ENCODE measurements at regions of chr10 and their contacts with region 1.

Region 1: DNA sequence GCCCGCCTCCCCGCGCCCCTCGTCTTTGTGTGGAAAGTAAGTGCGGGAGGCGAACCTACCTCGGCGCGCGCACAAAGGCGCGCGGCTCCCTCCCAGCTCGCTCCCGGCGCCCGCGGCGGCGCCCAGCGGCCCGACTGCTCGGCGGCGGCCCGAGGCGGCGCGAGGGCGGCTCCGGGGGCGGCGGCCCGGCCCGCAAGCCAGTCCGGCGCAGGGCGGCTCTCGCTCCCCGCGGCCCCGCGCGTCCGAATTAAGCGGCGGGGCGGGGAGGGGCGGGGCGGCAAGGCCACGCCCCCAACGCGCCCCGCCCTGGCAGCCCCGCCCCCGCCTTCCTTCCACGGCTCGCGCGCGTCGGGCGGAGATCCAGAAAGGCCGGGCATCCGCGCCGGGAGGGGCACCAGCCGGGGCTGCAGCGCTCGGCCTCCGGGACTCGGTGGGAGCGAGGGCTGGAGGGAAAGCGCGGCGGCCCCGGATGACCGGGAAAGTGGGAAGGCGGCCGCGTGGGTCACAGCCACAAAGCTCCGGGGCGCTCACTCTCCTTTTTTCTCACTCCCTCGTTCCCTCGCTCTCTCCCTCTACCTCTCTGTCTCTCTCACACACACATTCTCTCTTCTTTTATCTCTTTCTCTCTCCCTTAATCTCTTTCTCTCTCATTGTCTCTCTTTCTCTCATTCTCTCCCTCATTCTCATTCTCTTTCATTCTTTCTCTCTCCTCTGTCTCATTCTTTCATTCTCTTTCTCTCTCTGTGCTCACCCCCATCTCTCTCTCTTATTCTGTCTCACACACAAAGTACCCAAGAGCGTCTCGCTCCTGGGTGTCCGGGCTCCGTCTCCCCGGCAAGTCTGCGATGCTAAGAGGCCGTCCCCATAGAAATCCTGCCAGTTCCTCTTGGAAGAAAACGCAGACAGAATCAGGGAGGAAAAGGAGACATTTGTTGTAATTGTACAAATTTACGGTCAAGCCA is 170.2 kb downstream of the FAM107B start:
- DNase-seq: peak; percentile 79 to 90
- ATAC-seq: peak; percentile 92 to 98 (median 95)
- H3K4me3 ChIP-seq: peak overlapping the region; percentile 47 to 76 (median 64)
- H3K27ac ChIP-seq: peak overlapping the region in 7 of 10 donors; percentile 11 to 92 (median 70)
- H3K4me1 ChIP-seq: peaks cover 4 to 56% (median 20%) of the 10 kb centered on the region in 9 donors
- H3K27me3 ChIP-seq: no peaks in the 10 kb centered on the region
- CTCF ChIP-seq: no peak

Region 2: GRCh38 chr10:14751014-14751896 is 146.8 kb after region 1 on chr10:
- intact Hi-C with region 1: loop called in 1 of 10 experiments (anchors 10 kb)
- DNase-seq: peak; percentile 60
- ATAC-seq: peak; percentile 76 to 88 (median 84)
- H3K4me3 ChIP-seq: no peak overlapping the region
- H3K27ac ChIP-seq: peak overlapping the region; percentile 68 to 87 (median 80)
- H3K4me1 ChIP-seq: peaks cover 8 to 50% (median 39%) of the 10 kb centered on the region in 9 donors
- H3K27me3 ChIP-seq: no peaks in the 10 kb centered on the region
- CTCF ChIP-seq: no peak

Region 3: GRCh38 chr10:14837757-14838581 is 233.5 kb after region 1 on chr10 and contains the starts of genes CDNF, HSPA14 and MSANTD7:
- intact Hi-C with region 1: loop called in 1 of 10 experiments (anchors 5 kb)
- DNase-seq: peak; percentile 99 to 100
- ATAC-seq: peak; percentile 98 to 100 (median 99)
- H3K4me3 ChIP-seq: peak within 1 kb of the TSS; percentile 80 to 99 (median 92)
- H3K27ac ChIP-seq: peak within 1 kb of the TSS; percentile 90 to 99 (median 96)
- H3K4me1 ChIP-seq: peaks cover 0 to 28% (median 24%) of the 10 kb centered on the region in 9 donors
- H3K27me3 ChIP-seq: no peaks in the 10 kb centered on the region
- CTCF ChIP-seq: peak in 1 of 9 donors; percentile 7
- total RNA-seq, gene CDNF: 2.5 to 6.3 (median 4.3) TPM
- total RNA-seq, gene HSPA14: 7.1 to 9.7 (median 8.2) TPM
- total RNA-seq, gene MSANTD7: 3.8 to 6.1 (median 5.6) TPM